ENCODE measurements at regions of chr16 and their contacts with region 1.

Region 1: GRCh38 chr16:13289515-13289914 is 388.1 kb downstream of the SHISA9 start:
- DNase-seq: no peak
- ATAC-seq: no peak
- H3K4me3 Mint-ChIP-seq: no peak overlapping the region
- H3K27ac Mint-ChIP-seq: no peak overlapping the region
- H3K4me1 Mint-ChIP-seq: peaks cover 22% of the 10 kb centered on the region
- H3K27me3 Mint-ChIP-seq: peaks cover 4% of the 10 kb centered on the region
- CTCF ChIP-seq: no peak

Region 2: GRCh38 chr16:13322336-13322735 is 32.8 kb after region 1 on chr16:
- CTCF ChIA-PET with region 1: interaction called, 13 read pairs
- POLR2A ChIA-PET with region 1: no interaction called
- DNase-seq: no peak
- ATAC-seq: peak; percentile 90
- H3K4me3 Mint-ChIP-seq: no peak overlapping the region
- H3K27ac Mint-ChIP-seq: no peak overlapping the region
- H3K4me1 Mint-ChIP-seq: peaks cover 39% of the 10 kb centered on the region
- H3K27me3 Mint-ChIP-seq: peaks cover 51% of the 10 kb centered on the region
- CTCF ChIP-seq: no peak

Region 3: GRCh38 chr16:13359835-13360234 is 70.3 kb after region 1 on chr16:
- CTCF ChIA-PET with region 1: no interaction called
- POLR2A ChIA-PET with region 1: no interaction called
- DNase-seq: no peak
- ATAC-seq: no peak
- H3K4me3 Mint-ChIP-seq: no peak overlapping the region
- H3K27ac Mint-ChIP-seq: no peak overlapping the region
- H3K4me1 Mint-ChIP-seq: peaks cover 50% of the 10 kb centered on the region
- H3K27me3 Mint-ChIP-seq: peaks cover 6% of the 10 kb centered on the region; the same call in 1 of the 2 replicates
- CTCF ChIP-seq: no peak